ENCODE measurements at regions of chr2 and their contacts with region 1.

Region 1: DNA sequence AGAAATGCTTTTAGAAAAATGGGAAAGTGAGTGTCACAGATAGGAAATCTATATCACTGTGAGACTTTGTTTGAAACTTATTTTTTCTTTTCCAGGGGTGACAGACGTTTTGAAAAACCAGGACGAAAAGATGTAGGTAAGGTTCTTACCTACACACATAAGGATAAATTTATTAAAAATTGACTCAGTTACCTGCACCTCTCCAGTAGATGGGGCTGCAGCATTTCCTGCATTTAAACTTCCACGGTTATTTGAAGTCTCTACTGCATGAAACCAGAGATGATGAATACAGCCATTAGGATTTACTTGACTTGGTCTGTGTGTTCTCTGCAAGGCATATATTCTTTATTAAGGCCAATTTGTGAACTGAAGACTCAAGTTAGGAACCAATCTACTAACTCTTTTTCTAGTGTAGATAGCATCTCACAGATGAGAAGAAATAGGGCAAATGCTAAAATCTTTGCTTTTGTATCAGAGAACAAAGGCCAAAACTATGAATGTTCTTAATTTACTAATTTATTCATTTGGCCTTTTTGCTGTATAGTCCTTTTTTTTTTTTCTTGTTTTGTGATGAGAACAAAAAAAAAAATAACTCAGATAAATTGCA is 15.0 kb downstream of the KCNJ13 start:
- DNase-seq: peak; percentile 58
- ATAC-seq: no peak
- H3K4me3 Mint-ChIP-seq: no peak overlapping the region
- H3K27ac Mint-ChIP-seq: no peak overlapping the region
- H3K4me1 Mint-ChIP-seq: peaks cover 17% of the 10 kb centered on the region
- H3K27me3 Mint-ChIP-seq: no peaks in the 10 kb centered on the region

Region 2: GRCh38 chr2:232772531-232772930 is 11.1 kb after region 1 on chr2:
- CTCF ChIA-PET with region 1: interaction called, 10 read pairs
- POLR2A ChIA-PET with region 1: no interaction called
- intact Hi-C with region 1: no loop called
- DNase-seq: no peak
- ATAC-seq: peak; percentile 73
- H3K4me3 Mint-ChIP-seq: no peak overlapping the region
- H3K27ac Mint-ChIP-seq: peak overlapping the region; percentile 51
- H3K4me1 Mint-ChIP-seq: peaks cover 20% of the 10 kb centered on the region
- H3K27me3 Mint-ChIP-seq: no peaks in the 10 kb centered on the region

Measured in activated CD4-positive, alpha-beta T cell treated with anti-CD3 and anti-CD28 coated beads for 36 hours (primary cell).